ENCODE measurements at regions of chr21 and their contacts with region 1.

Region 1: DNA sequence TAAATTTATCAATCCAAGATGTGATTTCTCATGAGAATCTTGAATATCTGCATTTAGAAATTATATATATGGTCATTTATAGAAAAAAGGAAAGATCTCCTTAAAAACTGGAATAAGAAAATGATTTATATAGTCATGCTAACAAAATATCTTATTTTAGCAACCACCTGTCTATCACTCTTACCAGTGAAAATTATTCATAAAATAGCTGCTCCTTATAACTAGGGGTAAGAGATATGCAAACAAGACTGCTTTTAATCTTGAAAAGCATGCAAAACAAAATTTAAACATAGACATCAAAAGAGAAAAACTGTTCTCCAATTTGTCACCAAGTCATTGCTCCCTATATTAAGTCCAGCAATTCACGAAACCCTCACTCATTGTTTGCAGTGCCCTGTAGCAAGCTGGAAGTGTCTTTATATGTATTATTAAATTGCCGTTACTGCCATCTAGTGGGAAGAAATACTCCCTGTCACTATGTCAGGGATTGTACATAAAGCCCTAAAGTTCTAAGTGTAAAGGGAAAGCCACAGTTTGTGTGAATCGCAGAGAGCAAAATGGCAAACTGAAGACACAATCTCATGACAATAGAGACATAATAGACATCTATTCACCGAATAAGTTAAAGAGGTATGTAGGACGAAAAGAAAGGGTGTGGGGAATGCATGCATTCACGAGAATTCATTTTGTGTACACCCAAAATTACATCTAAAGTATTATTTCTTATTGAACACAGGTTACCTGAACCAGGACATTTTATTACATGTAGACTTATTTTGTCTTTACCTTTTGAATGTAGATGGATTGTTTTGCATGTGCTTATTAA is 600.5 kb downstream of the USP25 start:
- DNase-seq: peak in 3 of 4 donors; percentile 17 to 56 (median 36)
- ATAC-seq: peak; percentile 94
- H3K4me3 ChIP-seq: no peak overlapping the region
- H3K27ac ChIP-seq: no peak overlapping the region
- H3K4me1 ChIP-seq: no peaks in the 10 kb centered on the region
- H3K27me3 ChIP-seq: no peaks in the 10 kb centered on the region
- CTCF ChIP-seq: peak; percentile 26 to 74 (median 70)
- POLR2A ChIP-seq: no peak

Region 2: GRCh38 chr21:16082038-16082816 is 248.1 kb before region 1 on chr21:
- intact Hi-C with region 1: loop called (anchors 10 kb)
- DNase-seq: no peak
- ATAC-seq: peak; percentile 35
- H3K4me3 ChIP-seq: no peak overlapping the region
- H3K27ac ChIP-seq: no peak overlapping the region
- H3K4me1 ChIP-seq: no peaks in the 10 kb centered on the region
- H3K27me3 ChIP-seq: no peaks in the 10 kb centered on the region
- CTCF ChIP-seq: peak in 6 of 7 experiments; percentile 42 to 66 (median 48)
- POLR2A ChIP-seq: no peak

Measured in body of pancreas (tissue), 4 donors.